ENCODE measurements at regions of chr15 and their contacts with region 1.

Region 1: DNA sequence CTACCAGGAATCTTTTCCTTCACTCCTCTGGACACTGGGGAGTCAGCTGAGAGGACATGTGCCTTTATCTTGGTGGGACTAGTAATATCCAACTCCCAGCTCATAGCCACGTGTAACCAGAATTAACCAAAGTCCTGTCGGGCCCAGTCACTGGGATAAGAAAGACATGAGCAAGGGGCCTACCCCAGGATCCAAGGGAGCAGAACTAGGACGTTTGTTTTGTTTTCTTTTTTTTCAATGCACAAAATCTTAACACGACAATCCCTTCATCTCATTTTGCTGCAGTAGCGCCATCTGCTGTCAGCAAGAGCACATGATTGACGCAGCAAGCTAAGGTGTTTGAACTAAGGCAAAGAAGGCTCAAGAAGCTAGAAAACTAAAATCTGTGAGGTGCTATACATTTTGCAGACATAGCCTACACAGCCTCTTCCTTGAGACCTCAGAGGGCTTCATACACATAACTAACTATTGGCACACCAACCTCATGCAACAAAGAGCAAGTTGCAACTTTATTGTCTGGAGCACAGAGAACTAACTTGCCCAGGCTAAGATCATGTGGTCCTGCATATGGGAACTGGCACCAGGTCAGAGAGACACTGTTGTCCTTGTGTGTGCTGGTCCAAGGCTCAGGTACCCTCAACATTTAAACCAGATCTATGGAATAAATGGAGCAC is 43.6 kb downstream of the RLBP1 start:
- DNase-seq: peak; percentile 50 to 75 (median 71)
- H3K4me3 ChIP-seq: no peak overlapping the region
- H3K27ac ChIP-seq: no peak overlapping the region
- H3K4me1 ChIP-seq: no peaks in the 10 kb centered on the region
- H3K27me3 ChIP-seq: no peaks in the 10 kb centered on the region
- CTCF ChIP-seq: peak; percentile 65 to 80 (median 80)
- EP300 ChIP-seq: no peak
- POLR2A ChIP-seq: no peak

Region 2: GRCh38 chr15:88657326-88658069 is 520.3 kb before region 1 on chr15:
- intact Hi-C with region 1: no loop called
- DNase-seq: peak in 4 of 5 donors; percentile 49 to 70 (median 54)
- H3K4me3 ChIP-seq: no peak overlapping the region
- H3K27ac ChIP-seq: no peak overlapping the region
- H3K4me1 ChIP-seq: no peaks in the 10 kb centered on the region
- H3K27me3 ChIP-seq: no peaks in the 10 kb centered on the region
- CTCF ChIP-seq: peak; percentile 30 to 72 (median 57)
- EP300 ChIP-seq: no peak
- POLR2A ChIP-seq: no peak

Region 3: DNA sequence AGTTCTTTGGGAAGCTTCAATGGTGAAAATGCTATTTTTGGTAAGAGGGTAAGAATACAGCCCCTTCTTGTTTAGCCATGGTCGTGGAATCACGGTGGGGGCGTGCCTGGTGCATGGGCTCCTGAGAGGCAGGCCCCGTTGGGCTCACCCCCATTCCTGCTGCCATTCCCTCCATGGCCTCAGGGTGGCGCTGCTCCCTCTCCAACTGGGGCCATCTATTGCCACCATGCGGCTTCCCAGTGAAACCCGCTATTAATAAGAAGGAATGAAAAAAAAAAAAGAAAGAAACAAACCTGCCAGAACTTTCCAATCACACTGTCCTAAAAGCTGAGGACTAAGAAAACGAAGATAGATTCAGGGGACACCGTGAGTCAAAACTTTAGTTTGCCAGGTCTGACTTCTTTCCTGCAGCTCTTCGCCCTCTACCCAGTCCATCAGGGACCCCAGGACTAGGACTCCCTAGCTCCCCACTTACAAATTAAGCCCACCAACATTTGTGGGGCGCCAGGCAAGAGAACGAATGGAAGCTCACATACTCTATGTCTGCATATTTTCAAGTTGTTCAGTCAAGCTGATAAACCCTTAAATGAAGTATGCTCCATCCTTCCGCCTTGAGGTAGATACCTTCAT is 120.2 kb before region 1 on chr15:
- intact Hi-C with region 1: loop called in 3 of 4 experiments (anchors 2 kb)
- DNase-seq: peak; percentile 72 to 91 (median 84)
- H3K4me3 ChIP-seq: no peak overlapping the region
- H3K27ac ChIP-seq: no peak overlapping the region
- H3K4me1 ChIP-seq: no peaks in the 10 kb centered on the region
- H3K27me3 ChIP-seq: no peaks in the 10 kb centered on the region
- CTCF ChIP-seq: peak; percentile 89 to 95 (median 93)
- EP300 ChIP-seq: no peak
- POLR2A ChIP-seq: no peak

Region 4: GRCh38 chr15:89101302-89102191 is 76.2 kb before region 1 on chr15:
- intact Hi-C with region 1: loop called in 1 of 4 experiments (anchors 10 kb)
- DNase-seq: peak; percentile 77 to 85 (median 79)
- H3K4me3 ChIP-seq: no peak overlapping the region
- H3K27ac ChIP-seq: peak overlapping the region in 1 of 2 donors; percentile 30
- H3K4me1 ChIP-seq: peaks cover 36% of the 10 kb centered on the region
- H3K27me3 ChIP-seq: no peaks in the 10 kb centered on the region
- CTCF ChIP-seq: no peak
- EP300 ChIP-seq: peak; percentile 54
- POLR2A ChIP-seq: no peak

Region 5: GRCh38 chr15:89230277-89230676 is 52.5 kb after region 1 on chr15:
- intact Hi-C with region 1: no loop called
- DNase-seq: no peak
- H3K4me3 ChIP-seq: no peak overlapping the region
- H3K27ac ChIP-seq: no peak overlapping the region
- H3K4me1 ChIP-seq: no peaks in the 10 kb centered on the region
- H3K27me3 ChIP-seq: no peaks in the 10 kb centered on the region
- CTCF ChIP-seq: no peak
- EP300 ChIP-seq: no peak
- POLR2A ChIP-seq: no peak